GM12878 (cell line): ENCODE measurements at regions of chr15 and their contacts with region 1.

Region 1: DNA sequence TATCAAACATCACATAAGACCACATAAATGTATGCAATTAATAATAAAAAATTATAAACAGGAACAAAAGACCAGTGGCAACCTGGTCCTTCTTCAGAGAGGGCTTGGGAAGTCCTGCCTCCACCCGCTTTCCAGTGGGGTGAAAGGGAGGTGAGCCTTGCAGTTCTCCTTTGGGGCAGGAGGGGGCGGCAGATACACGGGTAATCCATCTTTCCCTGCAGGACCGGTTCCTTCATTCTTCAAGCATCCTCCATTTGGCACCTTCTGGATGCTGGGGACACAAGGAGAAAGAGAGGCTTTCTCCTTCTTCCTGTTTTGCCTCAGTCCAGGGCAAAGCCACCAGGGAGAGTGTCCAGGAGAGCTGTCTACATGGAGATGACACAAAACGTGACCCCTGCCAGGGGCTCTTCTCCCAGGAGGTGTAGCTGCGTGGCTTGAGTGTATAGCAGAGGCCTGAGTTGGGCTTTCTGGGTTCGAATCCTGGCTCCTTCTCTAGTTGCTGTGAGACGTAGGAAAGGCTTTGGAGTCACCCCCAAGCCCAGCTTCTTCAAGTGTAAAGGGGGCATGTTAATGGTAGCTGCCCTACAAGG is 23.2 kb downstream of the RPLP1 start:
- DNase-seq: no peak
- ATAC-seq: peak; percentile 89
- H3K4me3 ChIP-seq: no peak overlapping the region
- H3K27ac ChIP-seq: no peak overlapping the region
- H3K4me1 ChIP-seq: no peaks in the 10 kb centered on the region
- H3K27me3 ChIP-seq: no peaks in the 10 kb centered on the region
- CTCF ChIP-seq: peak; percentile 95 to 97 (median 97); a peak in 5 of 6 replicates
- EP300 ChIP-seq: no peak
- POLR2A ChIP-seq: no peak
- RAD21 ChIP-seq: peak; percentile 91

Region 2: DNA sequence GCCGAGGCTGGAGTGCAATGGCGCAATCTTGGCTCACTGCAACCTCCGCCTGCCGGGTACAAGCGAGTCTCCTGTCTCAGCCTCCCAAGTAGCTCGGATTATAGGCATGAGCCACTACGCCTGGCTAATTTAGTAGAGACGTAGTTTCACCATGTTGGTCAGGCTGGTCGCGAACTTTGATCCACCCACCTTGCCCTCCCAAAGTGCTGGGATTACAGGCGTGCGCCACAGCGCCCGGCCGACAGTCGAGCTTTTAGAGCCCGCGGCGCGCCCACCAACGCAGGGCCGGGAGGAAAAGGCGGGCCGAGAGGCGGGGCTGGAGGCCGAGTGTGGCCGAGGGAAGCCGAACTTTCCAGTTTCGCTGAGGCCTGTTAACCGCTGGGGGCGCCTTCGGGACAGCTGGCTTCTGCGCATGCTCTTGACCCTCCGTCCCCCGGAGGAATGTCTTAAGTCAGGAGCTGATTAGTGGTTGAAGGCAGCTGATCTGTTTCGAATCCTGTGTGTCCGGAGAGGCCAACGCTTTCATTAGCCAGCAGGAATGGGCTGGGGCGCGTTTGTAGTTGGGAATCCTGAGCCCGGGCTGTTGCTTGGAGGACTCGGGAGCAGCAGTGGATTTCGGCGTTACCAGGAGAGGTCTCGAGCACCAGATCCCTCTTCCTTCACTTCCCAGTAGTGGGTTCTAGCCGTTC is 13.2 kb before region 1 on chr15:
- CTCF ChIA-PET with region 1: interaction called, 17 read pairs
- POLR2A ChIA-PET with region 1: no interaction called
- RAD21 ChIA-PET with region 1: interaction called, 3 read pairs
- SMC1A ChIA-PET with region 1: interaction called, 4 read pairs
- in situ Hi-C with region 1: no loop called
- intact Hi-C with region 1: no loop called
- DNase-seq: peak; percentile 83
- ATAC-seq: peak; percentile 97
- H3K4me3 ChIP-seq: peak overlapping the region; percentile 80
- H3K27ac ChIP-seq: peak overlapping the region; percentile 76
- H3K4me1 ChIP-seq: peaks cover 6% of the 10 kb centered on the region
- H3K27me3 ChIP-seq: no peaks in the 10 kb centered on the region
- CTCF ChIP-seq: peak; percentile 85 to 95 (median 86)
- EP300 ChIP-seq: no peak
- POLR2A ChIP-seq: peak; percentile 69
- RAD21 ChIP-seq: no peak

Region 3: GRCh38 chr15:69719527-69720240 is 243.8 kb after region 1 on chr15:
- CTCF ChIA-PET with region 1: interaction called, 3 read pairs
- POLR2A ChIA-PET with region 1: no interaction called
- RAD21 ChIA-PET with region 1: no interaction called
- SMC1A ChIA-PET with region 1: no interaction called
- in situ Hi-C with region 1: no loop called
- intact Hi-C with region 1: loop called (anchors 5 kb)
- DNase-seq: no peak
- ATAC-seq: peak; percentile 86
- H3K4me3 ChIP-seq: no peak overlapping the region
- H3K27ac ChIP-seq: no peak overlapping the region
- H3K4me1 ChIP-seq: peaks cover 22% of the 10 kb centered on the region
- H3K27me3 ChIP-seq: no peaks in the 10 kb centered on the region
- CTCF ChIP-seq: no peak
- EP300 ChIP-seq: peak in 1 of 2 experiments; percentile 19; a peak in 1 of 4 replicates
- POLR2A ChIP-seq: no peak
- RAD21 ChIP-seq: no peak

Region 4: DNA sequence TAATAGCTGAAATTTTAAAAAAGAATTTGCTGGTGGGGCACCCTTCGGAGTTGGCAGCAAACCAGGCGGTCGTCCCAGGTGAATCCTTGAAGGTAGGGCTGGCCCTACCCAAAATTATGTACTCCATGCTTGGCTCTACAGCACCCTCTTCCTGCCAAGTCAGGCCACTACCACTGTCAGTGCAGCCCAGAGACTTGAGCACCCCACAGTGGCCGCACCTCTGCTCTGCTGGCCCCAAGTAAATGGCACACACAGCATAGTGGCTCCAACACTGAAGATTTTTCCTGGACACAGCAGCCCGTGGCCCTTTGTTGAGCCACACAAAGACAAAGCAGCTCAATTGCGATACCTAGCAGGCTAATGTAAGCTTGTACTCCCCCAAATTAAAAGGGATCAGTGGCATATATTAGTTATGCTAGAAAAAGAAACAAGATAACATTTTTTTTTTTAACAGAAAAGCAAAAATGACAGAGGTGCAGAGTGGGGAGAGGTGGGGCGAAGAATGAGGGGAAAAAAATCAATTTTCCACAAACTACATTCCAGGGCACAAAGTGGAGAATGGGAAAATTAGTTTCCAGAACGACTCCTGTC is 1037.0 kb after region 1 on chr15:
- CTCF ChIA-PET with region 1: interaction called, 3 read pairs
- POLR2A ChIA-PET with region 1: no interaction called
- RAD21 ChIA-PET with region 1: no interaction called
- SMC1A ChIA-PET with region 1: no interaction called
- in situ Hi-C with region 1: no loop called
- intact Hi-C with region 1: loop called (anchors 5 kb)
- DNase-seq: no peak
- ATAC-seq: peak; percentile 99
- H3K4me3 ChIP-seq: no peak overlapping the region
- H3K27ac ChIP-seq: no peak overlapping the region
- H3K4me1 ChIP-seq: peaks cover 15% of the 10 kb centered on the region
- H3K27me3 ChIP-seq: no peaks in the 10 kb centered on the region; a peak in 1 of 4 replicates
- CTCF ChIP-seq: peak; percentile 96 to 99 (median 98); a peak in 5 of 6 replicates
- EP300 ChIP-seq: no peak
- POLR2A ChIP-seq: no peak
- RAD21 ChIP-seq: peak; percentile 90

Region 5: DNA sequence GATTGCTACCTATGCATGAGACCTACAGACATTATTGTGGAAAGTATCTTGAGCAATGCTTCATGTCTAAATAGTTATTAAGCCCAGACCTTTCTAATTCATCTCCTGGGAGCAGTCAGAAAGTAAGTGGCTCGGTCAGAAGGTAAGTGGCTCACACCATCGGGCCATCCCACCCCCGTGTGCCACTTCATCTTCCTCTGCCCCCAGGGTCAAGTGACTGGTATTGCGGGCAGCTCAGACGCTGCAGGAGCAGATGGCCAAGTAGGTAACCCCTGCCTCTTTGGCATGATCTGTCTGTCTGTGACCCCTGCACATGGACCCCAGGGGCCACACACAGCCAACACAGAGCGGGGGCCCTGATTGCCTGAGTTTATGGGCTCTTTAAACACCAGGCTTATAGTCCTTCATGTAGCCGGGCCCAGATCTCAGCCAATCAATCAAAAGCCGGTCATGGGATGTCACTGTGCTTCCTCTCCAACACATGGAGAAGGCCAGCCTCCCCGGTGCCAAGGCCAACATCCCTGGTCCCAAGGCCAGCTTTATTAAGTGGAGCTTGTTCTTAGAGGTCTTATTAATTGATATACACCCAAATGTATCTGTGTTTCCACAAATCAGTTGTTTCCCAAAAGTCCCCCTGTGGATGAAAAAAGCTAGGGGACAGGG is 1335.2 kb after region 1 on chr15:
- CTCF ChIA-PET with region 1: no interaction called
- POLR2A ChIA-PET with region 1: no interaction called
- RAD21 ChIA-PET with region 1: no interaction called
- SMC1A ChIA-PET with region 1: no interaction called
- in situ Hi-C with region 1: no loop called
- intact Hi-C with region 1: loop called (anchors 5 kb)
- DNase-seq: no peak
- ATAC-seq: no peak
- H3K4me3 ChIP-seq: no peak overlapping the region
- H3K27ac ChIP-seq: no peak overlapping the region
- H3K4me1 ChIP-seq: no peaks in the 10 kb centered on the region
- H3K27me3 ChIP-seq: no peaks in the 10 kb centered on the region; a peak in 1 of 4 replicates
- CTCF ChIP-seq: no peak
- EP300 ChIP-seq: no peak
- POLR2A ChIP-seq: no peak
- RAD21 ChIP-seq: no peak